ENCODE measurements at regions of chr13 and their contacts with region 1.

Region 1: DNA sequence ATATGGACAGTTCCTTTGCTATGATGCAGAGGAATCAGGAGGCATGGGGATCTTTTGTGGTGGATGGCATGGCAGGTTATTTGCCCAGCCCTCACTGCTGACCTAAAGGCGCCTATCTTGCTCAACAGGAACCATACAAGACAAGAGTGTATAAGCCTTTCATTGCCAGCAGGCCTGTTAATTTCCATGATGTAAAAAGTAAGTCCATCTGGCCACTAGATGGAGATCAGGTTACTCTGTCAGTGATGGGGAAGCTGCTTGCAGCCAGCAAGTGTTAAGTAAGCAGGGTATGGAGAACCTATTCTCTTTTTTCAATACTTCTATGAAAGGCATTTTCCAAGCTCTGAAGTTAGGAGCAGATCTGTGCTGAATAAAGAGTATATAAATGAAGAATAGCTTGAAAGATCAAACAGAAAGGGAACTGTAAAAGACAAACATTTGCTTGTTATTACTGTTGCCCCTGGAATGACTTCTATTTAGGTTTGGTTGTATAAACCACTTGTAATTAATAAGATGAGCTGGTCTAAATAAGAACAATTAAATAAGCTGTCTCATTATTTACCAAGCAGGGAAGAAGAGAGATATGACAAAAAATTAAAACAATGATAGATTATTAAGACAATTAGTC is 210.9 kb downstream of the RGCC start:
- DNase-seq: no peak
- H3K4me3 ChIP-seq: no peak overlapping the region
- H3K27ac ChIP-seq: no peak overlapping the region
- H3K4me1 ChIP-seq: peaks cover 15% of the 10 kb centered on the region
- H3K27me3 ChIP-seq: no peaks in the 10 kb centered on the region
- CTCF ChIP-seq: peak; percentile 85

Region 2: DNA sequence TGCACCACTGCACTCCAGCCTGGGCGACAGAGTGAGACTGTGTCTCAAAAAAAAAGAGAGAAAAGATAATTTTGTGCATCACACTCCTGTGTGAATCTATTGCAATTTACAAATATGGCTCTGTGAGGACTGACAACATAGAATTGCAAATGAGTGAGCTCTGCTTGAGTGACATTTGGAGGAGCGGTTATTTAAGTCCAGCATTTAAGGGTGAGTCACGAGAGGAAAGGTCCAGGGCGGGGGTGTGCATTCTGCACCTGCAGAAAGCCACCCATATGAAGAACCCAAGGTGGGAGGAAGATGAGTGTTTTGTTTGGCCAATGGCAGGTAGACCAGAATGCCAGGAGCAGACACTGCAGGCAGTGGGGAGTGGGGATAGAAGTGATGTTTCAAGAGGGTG is 438.8 kb after region 1 on chr13:
- intact Hi-C with region 1: loop called (anchors 5 kb)
- DNase-seq: no peak
- H3K4me3 ChIP-seq: no peak overlapping the region
- H3K27ac ChIP-seq: no peak overlapping the region
- H3K4me1 ChIP-seq: peaks cover 24% of the 10 kb centered on the region
- H3K27me3 ChIP-seq: no peaks in the 10 kb centered on the region
- CTCF ChIP-seq: no peak